Dorsolateral prefrontal cortex (tissue), 120 donors: ENCODE measurements at regions of chr1 and their contacts with region 1.

Region 1: GRCh38 chr1:12314333-12314903 is 84.6 kb downstream of the VPS13D start:
- DNase-seq: no peak
- H3K4me3 ChIP-seq: no peak overlapping the region
- H3K27ac ChIP-seq: peak overlapping the region in 9 of 59 donors; percentile 2 to 64 (median 30)
- H3K27me3 ChIP-seq: no peaks in the 10 kb centered on the region
- CTCF ChIP-seq: peak in 54 of 56 donors; percentile 31 to 76 (median 53)

Region 2: GRCh38 chr1:12658531-12659453 is 344.4 kb after region 1 on chr1:
- intact Hi-C with region 1: loop called in 1 of 2 experiments (anchors 2 kb)
- DNase-seq: peak; percentile 23 to 81 (median 68)
- H3K4me3 ChIP-seq: peak overlapping the region in 2 of 59 donors; percentile 6 to 28
- H3K27ac ChIP-seq: no peak overlapping the region
- H3K27me3 ChIP-seq: no peaks in the 10 kb centered on the region
- CTCF ChIP-seq: peak; percentile 82 to 98 (median 94)